ENCODE measurements at regions of chr1 and their contacts with region 1.

Region 1: GRCh38 chr1:110780600-110781484 is 92.1 kb upstream of the CD53 start:
- DNase-seq: peak; percentile 81 to 89 (median 86)
- ATAC-seq: peak; percentile 93
- H3K4me3 ChIP-seq: no peak overlapping the region
- H3K27ac ChIP-seq: no peak overlapping the region
- H3K4me1 ChIP-seq: no peaks in the 10 kb centered on the region
- H3K27me3 ChIP-seq: peaks cover 5 to 16% of the 10 kb centered on the region in 2 experiments; a peak in 2 of 5 replicates
- CTCF ChIP-seq: peak; percentile 89 to 95 (median 94)
- EP300 ChIP-seq: no peak
- POLR2A ChIP-seq: no peak
- RAD21 ChIP-seq: peak; percentile 71 to 92

Region 2: DNA sequence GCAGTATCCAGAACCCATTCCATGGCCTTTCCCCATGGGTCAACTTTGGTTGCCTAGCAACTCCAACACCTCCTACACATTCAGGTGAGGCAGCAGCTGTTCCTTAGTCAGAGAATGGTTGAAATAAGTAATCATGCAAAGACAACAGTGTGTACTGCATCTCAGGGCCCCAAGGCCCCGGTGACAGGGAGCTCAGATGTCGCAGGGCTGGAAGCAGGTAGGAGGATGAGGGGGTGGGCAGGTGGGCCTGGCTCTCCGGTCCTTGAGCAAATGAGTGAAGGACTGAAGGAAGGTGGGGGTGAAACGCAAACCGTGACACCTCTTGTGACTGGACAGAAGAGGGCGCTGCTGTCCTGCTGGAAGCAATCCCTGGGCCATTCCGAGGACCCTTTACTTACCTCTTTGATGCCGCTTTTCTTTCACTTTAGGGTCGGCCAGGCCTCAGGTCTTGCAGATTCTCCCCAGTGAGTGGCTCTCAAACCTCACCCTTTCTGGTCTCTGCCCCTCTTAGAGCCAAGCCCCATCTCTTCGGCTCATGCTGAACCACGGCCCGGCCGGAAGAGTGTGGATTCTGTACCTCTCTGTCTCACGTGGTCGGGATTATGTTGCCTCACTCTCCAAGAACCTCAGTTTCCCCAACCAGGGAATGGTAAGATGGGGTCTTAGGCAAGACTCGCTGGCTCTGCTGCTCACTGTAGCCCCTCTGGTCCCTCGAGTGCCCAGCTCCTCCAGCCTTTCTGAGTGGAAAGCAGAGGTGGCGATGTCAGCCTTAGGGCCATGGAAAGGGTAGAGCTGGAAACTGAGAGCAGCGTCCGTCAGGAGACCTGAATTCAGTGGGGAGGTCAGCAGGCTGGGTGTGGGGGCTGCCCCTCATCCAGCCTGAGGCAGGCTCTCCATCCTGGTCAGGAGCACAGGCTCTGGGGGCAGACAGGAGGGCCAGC is 256.3 kb before region 1 on chr1:
- CTCF ChIA-PET with region 1: interaction called, 5 read pairs
- POLR2A ChIA-PET with region 1: no interaction called
- in situ Hi-C with region 1: no loop called
- intact Hi-C with region 1: loop called (anchors 1 kb)
- DNase-seq: peak; percentile 70 to 90 (median 85)
- ATAC-seq: peak; percentile 97
- H3K4me3 ChIP-seq: no peak overlapping the region
- H3K27ac ChIP-seq: no peak overlapping the region
- H3K4me1 ChIP-seq: no peaks in the 10 kb centered on the region; a peak in 2 of 5 replicates
- H3K27me3 ChIP-seq: peaks cover 2 to 36% of the 10 kb centered on the region in 2 experiments; a peak in 3 of 5 replicates
- CTCF ChIP-seq: peak; percentile 89 to 95 (median 95)
- EP300 ChIP-seq: no peak
- POLR2A ChIP-seq: no peak
- RAD21 ChIP-seq: peak; percentile 74 to 94

Region 3: DNA sequence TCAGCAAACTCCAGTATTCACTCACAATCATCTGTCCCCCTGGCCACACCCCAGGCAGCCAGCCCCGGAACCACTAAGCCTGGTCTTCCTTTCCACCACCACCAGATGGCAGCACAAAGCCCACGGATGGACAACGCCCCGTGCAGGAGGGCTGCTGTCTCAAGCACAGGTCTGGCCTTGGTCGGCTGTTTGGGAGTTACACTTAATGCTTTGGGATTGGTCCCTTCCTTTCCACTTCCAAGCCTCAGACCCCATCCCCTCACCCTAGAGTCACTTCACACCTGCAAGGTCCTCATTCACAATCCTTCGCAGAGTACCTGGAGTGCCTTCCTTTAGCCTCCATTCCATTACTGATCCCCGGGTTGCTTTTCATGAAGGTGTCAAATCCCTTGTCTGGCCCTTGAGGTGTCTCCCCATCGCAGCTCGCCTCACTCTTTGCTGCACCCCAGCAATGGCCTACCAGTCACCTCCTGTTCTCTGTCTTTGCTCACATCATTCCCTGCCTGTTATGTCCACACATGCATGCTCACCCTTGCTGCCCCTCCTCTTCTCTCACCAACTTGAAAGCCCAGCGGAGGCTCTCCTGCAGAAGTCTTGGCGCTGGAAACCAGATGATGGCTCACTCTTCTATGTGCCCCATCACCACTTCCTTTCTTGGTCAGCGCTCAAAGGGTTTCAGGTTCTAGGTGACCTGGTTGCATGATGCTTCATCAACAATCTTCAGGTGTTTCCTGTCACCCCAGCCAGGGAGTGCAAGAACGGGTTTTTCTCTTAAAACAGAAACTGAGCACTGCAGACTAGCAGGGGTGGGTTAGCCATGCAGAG is 149.8 kb before region 1 on chr1:
- CTCF ChIA-PET with region 1: interaction called, 8 read pairs
- POLR2A ChIA-PET with region 1: no interaction called
- in situ Hi-C with region 1: no loop called
- intact Hi-C with region 1: loop called (anchors 1 kb)
- DNase-seq: peak; percentile 82 to 87 (median 84)
- ATAC-seq: peak; percentile 100
- H3K4me3 ChIP-seq: no peak overlapping the region
- H3K27ac ChIP-seq: no peak overlapping the region
- H3K4me1 ChIP-seq: no peaks in the 10 kb centered on the region
- H3K27me3 ChIP-seq: peaks cover 0 to 18% of the 10 kb centered on the region in 2 experiments; a peak in 2 of 5 replicates
- CTCF ChIP-seq: peak; percentile 89 to 96 (median 92)
- EP300 ChIP-seq: no peak
- POLR2A ChIP-seq: no peak
- RAD21 ChIP-seq: peak; percentile 82 to 92

Region 4: DNA sequence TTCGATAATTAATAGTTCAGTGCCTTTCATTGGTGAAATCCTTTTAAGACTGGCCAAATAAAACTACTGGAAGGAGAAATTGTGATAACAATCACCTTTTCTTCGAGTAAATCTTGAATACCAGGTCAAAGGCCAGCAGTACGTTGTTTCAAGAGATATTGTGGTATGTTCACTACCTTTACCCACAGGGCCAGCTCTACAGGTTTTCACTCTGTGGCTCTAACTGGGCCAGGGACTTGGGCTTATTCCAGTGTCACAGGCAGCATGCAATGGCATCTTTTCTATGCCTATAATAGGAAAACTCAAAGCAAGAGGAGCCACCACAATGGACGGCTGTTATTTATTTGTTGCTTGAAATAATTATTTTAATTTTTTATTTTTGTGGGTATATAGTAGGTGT is 209.7 kb after region 1 on chr1:
- CTCF ChIA-PET with region 1: no interaction called
- POLR2A ChIA-PET with region 1: interaction called, 3 read pairs
- in situ Hi-C with region 1: loop called (anchors 10 kb)
- intact Hi-C with region 1: loop called (anchors 1 kb)
- DNase-seq: no peak
- ATAC-seq: no peak
- H3K4me3 ChIP-seq: no peak overlapping the region
- H3K27ac ChIP-seq: no peak overlapping the region
- H3K4me1 ChIP-seq: no peaks in the 10 kb centered on the region
- H3K27me3 ChIP-seq: peaks cover 0 to 12% of the 10 kb centered on the region in 2 experiments; a peak in 2 of 5 replicates
- CTCF ChIP-seq: no peak
- EP300 ChIP-seq: no peak
- POLR2A ChIP-seq: no peak
- RAD21 ChIP-seq: no peak

Region 5: DNA sequence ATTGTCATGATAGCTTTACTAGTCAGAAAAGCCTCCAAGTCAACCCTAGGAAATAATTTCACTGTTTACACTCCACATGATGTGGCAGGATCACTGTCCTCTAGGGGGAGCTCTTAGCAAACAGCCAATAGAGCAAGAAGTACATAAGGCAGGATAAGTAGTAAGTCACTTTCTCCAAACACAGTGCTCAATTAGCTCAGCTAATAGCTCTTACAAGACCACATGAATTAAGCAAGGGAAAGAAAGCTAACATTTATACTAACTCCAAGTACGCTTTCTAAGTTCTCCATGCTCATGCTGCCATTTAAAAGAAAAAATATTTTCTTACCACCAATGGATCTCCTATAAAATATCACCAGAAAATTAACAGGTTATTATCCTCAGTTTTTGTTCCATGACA is 249.7 kb after region 1 on chr1:
- CTCF ChIA-PET with region 1: interaction called, 7 read pairs
- POLR2A ChIA-PET with region 1: no interaction called
- in situ Hi-C with region 1: no loop called
- intact Hi-C with region 1: loop called (anchors 2 kb)
- DNase-seq: peak; percentile 44 to 83 (median 53)
- ATAC-seq: peak; percentile 95
- H3K4me3 ChIP-seq: no peak overlapping the region
- H3K27ac ChIP-seq: no peak overlapping the region
- H3K4me1 ChIP-seq: peaks cover 0 to under 1% of the 10 kb centered on the region in 2 experiments; a peak in 1 of 5 replicates
- H3K27me3 ChIP-seq: no peaks in the 10 kb centered on the region
- CTCF ChIP-seq: peak; percentile 86 to 93 (median 87)
- EP300 ChIP-seq: no peak
- POLR2A ChIP-seq: no peak
- RAD21 ChIP-seq: peak; percentile 59 to 89

Region 6: DNA sequence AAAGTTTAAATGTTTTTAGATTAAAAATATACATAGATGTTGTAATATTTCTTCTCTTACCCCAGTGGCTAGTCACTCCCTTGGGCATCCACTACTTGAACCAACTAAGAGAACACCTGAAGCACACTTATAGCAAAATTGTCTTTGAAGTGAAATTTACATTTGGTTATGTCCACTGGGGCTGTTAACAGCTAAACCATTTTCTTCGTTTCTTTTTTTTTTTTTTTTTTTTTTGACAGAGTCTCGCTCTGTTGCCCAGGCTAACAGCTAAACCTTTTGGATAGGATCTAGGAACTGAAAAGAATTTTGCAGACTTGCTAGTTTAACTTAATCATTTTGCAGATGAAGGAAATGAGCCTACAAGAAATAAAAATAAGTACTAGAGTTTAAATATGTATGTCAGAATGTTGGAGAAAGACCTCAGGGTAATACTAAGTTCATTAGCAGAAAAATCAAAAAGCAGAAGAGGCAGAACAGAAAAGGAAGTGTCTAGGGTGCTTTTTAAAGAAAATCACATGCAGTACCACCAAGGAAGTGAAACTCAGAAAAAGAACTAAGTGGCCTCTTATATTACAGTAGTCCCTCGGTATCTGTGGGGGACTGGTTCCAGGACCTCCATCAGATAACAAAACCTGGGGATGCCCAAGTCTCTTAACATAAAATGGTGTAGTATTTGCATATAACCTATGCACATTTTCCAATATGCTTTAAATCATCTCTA is 347.2 kb after region 1 on chr1:
- CTCF ChIA-PET with region 1: no interaction called
- POLR2A ChIA-PET with region 1: no interaction called
- in situ Hi-C with region 1: no loop called
- intact Hi-C with region 1: no loop called
- DNase-seq: no peak
- ATAC-seq: no peak
- H3K4me3 ChIP-seq: no peak overlapping the region
- H3K27ac ChIP-seq: no peak overlapping the region
- H3K4me1 ChIP-seq: no peaks in the 10 kb centered on the region
- H3K27me3 ChIP-seq: no peaks in the 10 kb centered on the region
- CTCF ChIP-seq: no peak
- EP300 ChIP-seq: no peak
- POLR2A ChIP-seq: no peak
- RAD21 ChIP-seq: no peak

Measured in K562 (cell line).